PC-9 (cell line): ENCODE measurements at regions of chr13 and their contacts with region 1.

Region 1: DNA sequence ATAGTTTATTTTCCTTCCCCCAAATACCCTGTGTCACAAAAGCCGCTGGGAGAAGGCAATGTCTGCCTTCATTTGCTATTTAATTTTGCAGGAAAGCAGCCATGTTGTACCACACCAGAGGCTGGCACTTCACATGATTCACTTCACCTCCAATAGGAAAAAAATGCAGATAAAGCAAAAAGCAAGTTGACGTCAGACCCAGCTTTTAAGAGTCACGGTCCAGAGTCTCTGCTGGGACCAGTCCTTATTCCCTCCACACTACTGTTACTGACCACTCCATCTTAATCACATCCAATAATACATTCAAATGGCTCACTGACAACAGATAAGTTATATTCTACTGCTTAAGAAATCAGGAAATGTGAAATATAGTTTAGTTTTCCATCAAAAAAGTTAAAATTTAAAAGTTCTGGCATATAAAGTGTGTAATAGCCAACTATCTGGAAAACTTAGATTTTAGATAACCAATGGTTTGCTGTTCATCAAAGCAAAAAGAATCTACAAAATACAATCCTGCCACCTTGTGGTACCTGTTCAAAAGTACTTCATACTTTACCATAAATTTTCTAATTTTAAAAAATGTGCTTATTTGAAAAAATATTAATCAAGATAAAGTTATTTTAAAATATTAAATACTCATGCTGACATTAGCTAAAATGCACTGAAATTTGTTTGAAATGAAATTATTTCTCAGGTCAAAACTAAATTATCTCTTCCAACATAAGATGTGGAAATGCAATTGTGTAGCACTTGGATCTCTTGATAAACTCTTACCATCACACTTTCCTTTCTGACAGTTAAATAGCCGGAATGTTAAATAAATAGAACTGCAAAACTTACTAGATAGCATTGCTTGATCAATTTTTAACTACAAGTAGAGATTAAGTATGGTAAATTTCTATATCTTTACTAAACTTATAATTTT is 97.3 kb downstream of the SERP2 start:
- DNase-seq: no peak
- H3K4me3 ChIP-seq: no peak overlapping the region
- H3K27ac ChIP-seq: 0 out of 2 replicates have a peak overlapping the region, but pooled peaks have one; percentile 26
- H3K4me1 ChIP-seq: peaks cover 48% of the 10 kb centered on the region
- H3K27me3 ChIP-seq: no peaks in the 10 kb centered on the region
- CTCF ChIP-seq: peak; percentile 70

Region 2: DNA sequence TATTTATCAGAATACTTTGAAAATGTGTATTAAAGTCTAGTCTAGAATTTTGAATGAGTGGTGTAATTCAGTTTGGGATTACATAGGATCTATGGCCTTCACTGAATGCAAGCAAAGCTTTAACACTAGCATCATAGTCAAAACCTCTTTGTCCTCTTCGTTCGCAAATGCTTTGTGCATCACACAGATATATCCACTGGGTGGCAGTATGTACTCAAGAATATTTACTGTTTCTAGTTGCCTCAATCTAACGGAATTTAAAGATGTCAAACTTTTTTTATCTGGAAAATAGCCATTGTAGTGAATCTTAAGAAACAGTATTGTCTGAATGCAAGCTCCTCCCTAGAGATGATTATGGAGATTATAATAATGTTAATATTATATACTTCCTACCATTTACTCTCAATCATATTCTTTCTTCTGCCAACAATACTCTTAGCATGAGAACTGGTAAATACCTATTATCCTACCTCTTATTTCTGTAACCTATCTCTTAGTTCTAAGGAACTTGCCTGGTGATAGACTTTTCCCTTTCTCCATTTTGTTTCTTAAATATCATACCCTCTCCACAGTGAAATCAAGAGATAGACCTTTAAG is 565.4 kb before region 1 on chr13:
- CTCF ChIA-PET with region 1: interaction called, 4 read pairs
- POLR2A ChIA-PET with region 1: no interaction called
- intact Hi-C with region 1: loop called (anchors 1 kb)
- DNase-seq: peak; percentile 9 to 62
- H3K4me3 ChIP-seq: no peak overlapping the region
- H3K27ac ChIP-seq: no peak overlapping the region
- H3K4me1 ChIP-seq: peaks cover 12% of the 10 kb centered on the region
- H3K27me3 ChIP-seq: no peaks in the 10 kb centered on the region
- CTCF ChIP-seq: peak; percentile 77

Region 3: DNA sequence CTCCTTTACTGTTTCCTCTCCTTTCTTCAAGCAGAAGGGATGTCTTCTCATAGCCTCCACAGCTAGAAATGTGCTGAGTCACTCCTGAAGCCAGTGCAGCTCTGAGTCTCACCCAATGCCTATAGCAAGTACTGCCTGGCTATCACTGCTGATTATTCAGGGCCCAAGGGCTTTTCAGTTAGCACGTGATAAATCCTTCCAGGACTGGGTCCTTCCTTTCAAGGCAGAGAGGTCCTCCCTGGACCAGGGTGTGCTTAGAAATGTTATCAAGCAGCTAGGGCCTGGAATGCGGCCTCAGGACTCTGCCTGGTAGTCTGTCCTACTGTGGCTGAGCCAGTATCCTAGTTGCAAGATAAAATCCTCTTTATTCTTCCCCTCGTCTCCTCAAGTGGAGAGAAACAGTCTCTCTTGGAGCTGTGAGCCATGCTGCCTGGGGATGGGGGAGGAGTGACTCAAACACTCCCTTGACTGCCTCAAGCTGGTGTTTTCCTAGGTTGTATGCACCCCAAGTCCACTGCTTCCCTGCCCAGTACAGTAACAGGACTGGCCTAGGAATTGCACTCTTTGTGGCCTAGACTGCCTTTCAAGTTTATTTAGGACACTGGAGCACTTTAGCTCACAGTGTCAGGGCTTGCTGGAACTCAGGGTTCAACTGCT is 296.0 kb before region 1 on chr13:
- CTCF ChIA-PET with region 1: no interaction called
- POLR2A ChIA-PET with region 1: no interaction called
- intact Hi-C with region 1: no loop called
- DNase-seq: no peak
- H3K4me3 ChIP-seq: no peak overlapping the region
- H3K27ac ChIP-seq: peak overlapping the region; percentile 42
- H3K4me1 ChIP-seq: peaks cover 28% of the 10 kb centered on the region
- H3K27me3 ChIP-seq: no peaks in the 10 kb centered on the region
- CTCF ChIP-seq: no peak

Region 4: GRCh38 chr13:44249431-44249836 is 221.5 kb before region 1 on chr13:
- CTCF ChIA-PET with region 1: no interaction called
- POLR2A ChIA-PET with region 1: no interaction called
- intact Hi-C with region 1: no loop called
- DNase-seq: peak in 1 of 2 experiments; percentile 54
- H3K4me3 ChIP-seq: no peak overlapping the region
- H3K27ac ChIP-seq: peak overlapping the region; percentile 51
- H3K4me1 ChIP-seq: peaks cover 15% of the 10 kb centered on the region
- H3K27me3 ChIP-seq: no peaks in the 10 kb centered on the region
- CTCF ChIP-seq: no peak

Region 5: DNA sequence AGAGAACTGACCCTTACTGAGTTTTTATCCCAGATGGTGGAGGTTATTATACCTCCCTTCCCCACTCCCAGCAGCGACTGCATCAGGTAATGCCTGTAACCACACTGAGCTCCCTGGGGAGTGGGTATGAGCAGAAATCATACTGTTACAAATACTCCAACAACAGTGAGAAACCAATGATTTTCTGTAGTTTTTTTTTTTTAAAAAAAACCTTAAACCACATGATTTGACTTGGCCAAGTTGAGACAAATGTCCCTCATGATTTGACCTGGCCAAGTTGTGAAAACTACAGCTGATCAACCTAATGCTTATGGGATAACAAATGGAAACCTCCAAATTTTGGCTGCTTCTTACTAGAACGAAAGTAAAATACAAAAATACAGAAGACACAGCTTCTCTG is 130.4 kb before region 1 on chr13:
- CTCF ChIA-PET with region 1: no interaction called
- POLR2A ChIA-PET with region 1: no interaction called
- intact Hi-C with region 1: no loop called
- DNase-seq: no peak
- H3K4me3 ChIP-seq: no peak overlapping the region
- H3K27ac ChIP-seq: no peak overlapping the region
- H3K4me1 ChIP-seq: peaks cover 15% of the 10 kb centered on the region
- H3K27me3 ChIP-seq: no peaks in the 10 kb centered on the region
- CTCF ChIP-seq: no peak

Region 6: DNA sequence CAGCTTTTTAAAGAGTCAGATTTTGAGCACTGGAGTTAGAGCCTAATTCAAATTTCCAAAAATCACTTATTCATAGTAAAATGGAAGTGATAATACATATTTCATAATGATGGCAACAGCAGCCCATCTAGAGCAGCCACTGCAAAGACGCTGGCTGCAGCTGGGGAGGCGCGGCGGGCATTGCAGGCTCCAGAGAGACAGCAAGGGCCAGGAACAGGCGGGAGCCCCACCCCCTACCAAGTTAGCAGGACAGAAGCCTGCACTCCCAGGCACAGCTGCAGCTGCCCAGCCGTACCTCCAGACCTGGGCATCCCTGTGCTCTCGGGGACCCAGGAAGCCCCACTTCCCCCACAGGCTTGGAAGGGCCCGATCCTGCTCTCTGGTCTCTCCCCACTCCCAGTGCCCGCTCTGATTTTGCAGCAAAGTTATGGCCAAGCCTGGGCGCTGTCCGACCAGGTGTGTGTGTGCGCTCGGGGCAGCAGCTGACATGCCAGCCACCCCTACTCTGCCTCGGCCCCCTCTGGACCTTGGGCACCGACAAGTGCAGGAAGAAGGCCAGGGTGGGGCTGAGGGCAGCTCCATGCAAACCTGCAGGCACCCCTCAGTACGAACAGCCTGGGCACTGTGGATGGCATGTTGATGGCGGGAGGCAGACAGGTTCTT is 12.5 kb before region 1 on chr13:
- CTCF ChIA-PET with region 1: no interaction called
- POLR2A ChIA-PET with region 1: no interaction called
- intact Hi-C with region 1: no loop called
- DNase-seq: no peak
- H3K4me3 ChIP-seq: no peak overlapping the region
- H3K27ac ChIP-seq: no peak overlapping the region
- H3K4me1 ChIP-seq: no peaks in the 10 kb centered on the region
- H3K27me3 ChIP-seq: no peaks in the 10 kb centered on the region
- CTCF ChIP-seq: no peak

Region 7: DNA sequence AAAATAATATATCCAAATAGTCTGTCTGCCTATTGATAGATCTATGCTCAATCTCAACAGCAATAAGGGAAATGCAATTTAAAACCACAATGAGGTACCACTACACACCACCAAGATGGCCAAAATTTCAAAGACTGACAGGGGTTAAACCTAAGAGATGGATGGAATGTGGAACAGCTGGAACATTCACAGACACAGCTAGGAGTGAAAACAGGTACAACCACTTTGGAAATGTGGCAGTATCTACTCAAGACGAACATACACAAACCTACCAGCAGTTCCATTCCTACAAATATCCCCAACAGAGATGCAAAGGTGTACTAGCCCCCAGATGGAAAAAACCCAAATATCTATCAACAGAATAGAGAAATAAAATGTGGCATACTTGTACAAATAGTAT is 18.8 kb after region 1 on chr13:
- CTCF ChIA-PET with region 1: no interaction called
- POLR2A ChIA-PET with region 1: interaction called, 11 read pairs
- intact Hi-C with region 1: no loop called
- DNase-seq: no peak
- H3K4me3 ChIP-seq: no peak overlapping the region
- H3K27ac ChIP-seq: no peak overlapping the region
- H3K4me1 ChIP-seq: no peaks in the 10 kb centered on the region; the same call in none of the 2 replicates
- H3K27me3 ChIP-seq: no peaks in the 10 kb centered on the region
- CTCF ChIP-seq: no peak

Region 8: GRCh38 chr13:44692173-44692713 is 221.3 kb after region 1 on chr13:
- CTCF ChIA-PET with region 1: no interaction called
- POLR2A ChIA-PET with region 1: interaction called, 11 read pairs
- intact Hi-C with region 1: no loop called
- DNase-seq: peak in 1 of 2 experiments; percentile 42
- H3K4me3 ChIP-seq: no peak overlapping the region
- H3K27ac ChIP-seq: no peak overlapping the region
- H3K4me1 ChIP-seq: no peaks in the 10 kb centered on the region
- H3K27me3 ChIP-seq: no peaks in the 10 kb centered on the region
- CTCF ChIP-seq: no peak